ENCODE measurements at regions of chr1 and their contacts with region 1.

Region 1: DNA sequence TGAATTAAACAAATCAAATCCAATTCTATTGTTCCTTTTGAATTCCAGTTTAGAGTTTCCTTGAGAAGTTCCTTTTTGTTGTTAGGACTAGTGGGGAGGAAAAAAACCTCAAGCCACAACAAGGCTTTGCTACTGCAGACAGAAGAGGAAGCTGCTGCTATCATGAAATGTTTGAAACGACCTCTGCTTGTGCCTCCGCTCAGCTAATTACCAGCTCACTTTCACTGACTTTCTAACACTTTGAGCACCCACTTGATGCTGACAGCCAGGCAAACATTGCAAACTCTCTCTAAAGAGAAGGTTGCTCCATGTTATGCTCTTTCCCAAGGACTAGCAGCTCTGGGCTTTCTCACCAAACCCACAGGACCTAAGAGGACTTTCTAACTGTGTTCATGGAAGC is 203.9 kb upstream of the PROX1 start:
- DNase-seq: peak in 5 of 14 experiments; percentile 8 to 45 (median 43)
- ATAC-seq: peak; percentile 76
- H3K4me3 ChIP-seq: no peak overlapping the region
- H3K4me3 Mint-ChIP-seq: peak overlapping the region; percentile 50
- H3K27ac ChIP-seq: no peak overlapping the region
- H3K27ac Mint-ChIP-seq: peak overlapping the region; percentile 34
- H3K4me1 ChIP-seq: peaks cover 9% of the 10 kb centered on the region
- H3K4me1 Mint-ChIP-seq: peaks cover 26% of the 10 kb centered on the region
- H3K27me3 ChIP-seq: no peaks in the 10 kb centered on the region
- H3K27me3 Mint-ChIP-seq: peaks cover 4% of the 10 kb centered on the region
- CTCF ChIP-seq: no peak

Region 2: DNA sequence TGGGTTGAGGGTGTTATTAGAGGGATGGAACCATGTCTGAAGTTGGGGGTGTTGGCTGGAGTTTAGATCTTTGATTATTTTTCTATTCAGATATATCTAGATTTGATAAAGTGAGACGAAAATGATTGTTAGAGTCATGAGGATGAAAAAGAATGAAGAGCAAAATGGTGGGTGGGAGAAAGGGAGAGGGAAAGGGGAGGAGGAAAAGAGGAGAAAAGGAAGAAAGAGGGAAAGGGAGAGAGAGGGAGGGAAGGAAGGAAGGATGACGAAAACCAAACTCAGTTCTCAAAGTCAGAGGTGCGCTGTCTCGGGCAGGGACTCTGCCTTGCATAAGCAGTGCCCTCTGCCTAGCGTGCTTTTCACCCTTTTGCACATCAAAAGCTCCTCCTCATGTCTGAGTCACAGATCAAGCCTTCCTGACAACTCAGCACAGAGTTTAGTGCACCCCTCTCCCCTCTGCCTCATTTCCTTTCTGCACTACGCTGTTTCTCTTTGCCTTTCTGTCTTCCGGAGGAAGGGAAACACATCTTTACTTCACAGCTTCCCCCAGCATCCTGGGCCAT is 22.0 kb before region 1 on chr1:
- CTCF ChIA-PET with region 1: no interaction called
- POLR2A ChIA-PET with region 1: interaction called, 12 read pairs
- intact Hi-C with region 1: loop called in 1 of 2 experiments (anchors 1 kb)
- DNase-seq: peak; percentile 15 to 69 (median 41)
- ATAC-seq: peak; percentile 100
- H3K4me3 ChIP-seq: no peak overlapping the region
- H3K4me3 Mint-ChIP-seq: peak overlapping the region; percentile 49
- H3K27ac ChIP-seq: no peak overlapping the region
- H3K27ac Mint-ChIP-seq: peak overlapping the region; percentile 77
- H3K4me1 ChIP-seq: peaks cover 11% of the 10 kb centered on the region
- H3K4me1 Mint-ChIP-seq: peaks cover 16% of the 10 kb centered on the region
- H3K27me3 ChIP-seq: no peaks in the 10 kb centered on the region
- H3K27me3 Mint-ChIP-seq: no peaks in the 10 kb centered on the region
- CTCF ChIP-seq: no peak

Region 3: GRCh38 chr1:213852107-213852506 is 68.2 kb after region 1 on chr1:
- CTCF ChIA-PET with region 1: no interaction called
- POLR2A ChIA-PET with region 1: interaction called, 5 read pairs
- intact Hi-C with region 1: loop called in 1 of 2 experiments (anchors 2 kb)
- DNase-seq: peak in 7 of 14 experiments; percentile 12 to 75 (median 40)
- ATAC-seq: peak; percentile 93
- H3K4me3 ChIP-seq: no peak overlapping the region
- H3K4me3 Mint-ChIP-seq: no peak overlapping the region
- H3K27ac ChIP-seq: peak overlapping the region in 1 of 2 donors; percentile 67
- H3K27ac Mint-ChIP-seq: no peak overlapping the region
- H3K4me1 ChIP-seq: peaks cover 25% of the 10 kb centered on the region
- H3K4me1 Mint-ChIP-seq: peaks cover 9% of the 10 kb centered on the region
- H3K27me3 ChIP-seq: no peaks in the 10 kb centered on the region
- H3K27me3 Mint-ChIP-seq: no peaks in the 10 kb centered on the region
- CTCF ChIP-seq: no peak

Region 4: DNA sequence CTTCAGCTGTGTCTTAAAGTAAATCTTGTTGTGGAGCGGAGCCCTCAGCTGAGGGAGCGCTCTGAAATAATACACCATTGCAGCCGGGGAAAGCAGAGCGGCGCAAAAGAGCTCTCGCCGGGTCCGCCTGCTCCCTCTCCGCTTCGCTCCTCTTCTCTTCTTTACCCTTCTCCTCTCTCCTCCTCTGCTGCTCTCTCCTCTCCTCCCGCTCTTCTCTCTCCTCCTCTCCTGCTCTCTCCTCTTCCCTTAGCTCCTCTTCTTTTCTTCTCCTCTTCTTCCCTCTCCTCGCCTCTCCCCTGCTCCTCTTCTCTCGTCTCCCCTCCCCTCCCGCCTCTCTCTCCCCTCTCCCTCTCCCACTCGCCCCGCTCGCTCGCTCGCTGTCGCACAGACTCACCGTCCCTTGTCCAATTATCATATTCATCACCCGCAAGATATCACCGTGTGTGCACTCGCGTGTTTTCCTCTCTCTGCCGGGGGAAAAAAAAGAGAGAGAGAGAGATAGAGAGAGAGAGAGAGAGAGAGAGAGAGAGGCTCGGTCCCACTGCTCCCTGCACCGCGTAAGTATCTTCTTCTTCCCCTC is 204.1 kb after region 1 on chr1 and contains the start of gene PROX1:
- CTCF ChIA-PET with region 1: no interaction called
- POLR2A ChIA-PET with region 1: interaction called, 4 read pairs
- intact Hi-C with region 1: loop called in 1 of 2 experiments (anchors 5 kb)
- DNase-seq: peak in 10 of 14 experiments; percentile 21 to 70 (median 44)
- ATAC-seq: peak; percentile 87
- H3K4me3 ChIP-seq: peak within 1 kb of the TSS; percentile 44
- H3K4me3 Mint-ChIP-seq: peak within 1 kb of the TSS; percentile 92
- H3K27ac ChIP-seq: no peak within 1 kb of the TSS
- H3K27ac Mint-ChIP-seq: peak within 1 kb of the TSS; percentile 85
- H3K4me1 ChIP-seq: peaks cover 42% of the 10 kb centered on the region
- H3K4me1 Mint-ChIP-seq: peaks cover 58% of the 10 kb centered on the region
- H3K27me3 ChIP-seq: peaks cover 69 to 97% of the 10 kb centered on the region in 2 experiments
- H3K27me3 Mint-ChIP-seq: peaks cover 100% of the 10 kb centered on the region
- CTCF ChIP-seq: no peak
- total RNA-seq, gene PROX1: 0.03 TPM in 1 of 2 experiments, not detected in the other

Region 5: DNA sequence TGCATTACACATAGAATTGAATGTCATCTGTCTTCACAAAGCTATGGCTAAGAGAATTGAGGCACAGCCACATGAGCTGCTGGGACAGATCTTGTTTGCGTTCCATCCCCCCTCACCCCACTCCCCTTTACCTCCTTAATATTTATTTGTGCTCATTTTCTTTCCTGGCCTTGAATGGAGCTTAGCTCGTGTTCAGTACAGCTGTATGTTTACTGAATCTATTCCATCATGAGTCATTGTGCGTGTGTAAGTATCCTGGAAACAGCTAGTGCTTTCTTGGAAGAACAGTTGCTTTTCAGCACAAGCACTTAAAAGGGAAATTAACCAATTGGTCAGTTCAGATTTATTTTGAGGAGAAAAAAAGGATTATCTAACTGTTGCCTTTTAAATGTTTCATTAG is 218.6 kb after region 1 on chr1:
- CTCF ChIA-PET with region 1: no interaction called
- POLR2A ChIA-PET with region 1: no interaction called
- intact Hi-C with region 1: no loop called
- DNase-seq: no peak
- ATAC-seq: no peak
- H3K4me3 ChIP-seq: no peak overlapping the region
- H3K4me3 Mint-ChIP-seq: no peak overlapping the region
- H3K27ac ChIP-seq: no peak overlapping the region
- H3K27ac Mint-ChIP-seq: no peak overlapping the region
- H3K4me1 ChIP-seq: no peaks in the 10 kb centered on the region
- H3K4me1 Mint-ChIP-seq: no peaks in the 10 kb centered on the region
- H3K27me3 ChIP-seq: no peaks in the 10 kb centered on the region
- H3K27me3 Mint-ChIP-seq: peaks cover 11% of the 10 kb centered on the region
- CTCF ChIP-seq: no peak

Region 6: DNA sequence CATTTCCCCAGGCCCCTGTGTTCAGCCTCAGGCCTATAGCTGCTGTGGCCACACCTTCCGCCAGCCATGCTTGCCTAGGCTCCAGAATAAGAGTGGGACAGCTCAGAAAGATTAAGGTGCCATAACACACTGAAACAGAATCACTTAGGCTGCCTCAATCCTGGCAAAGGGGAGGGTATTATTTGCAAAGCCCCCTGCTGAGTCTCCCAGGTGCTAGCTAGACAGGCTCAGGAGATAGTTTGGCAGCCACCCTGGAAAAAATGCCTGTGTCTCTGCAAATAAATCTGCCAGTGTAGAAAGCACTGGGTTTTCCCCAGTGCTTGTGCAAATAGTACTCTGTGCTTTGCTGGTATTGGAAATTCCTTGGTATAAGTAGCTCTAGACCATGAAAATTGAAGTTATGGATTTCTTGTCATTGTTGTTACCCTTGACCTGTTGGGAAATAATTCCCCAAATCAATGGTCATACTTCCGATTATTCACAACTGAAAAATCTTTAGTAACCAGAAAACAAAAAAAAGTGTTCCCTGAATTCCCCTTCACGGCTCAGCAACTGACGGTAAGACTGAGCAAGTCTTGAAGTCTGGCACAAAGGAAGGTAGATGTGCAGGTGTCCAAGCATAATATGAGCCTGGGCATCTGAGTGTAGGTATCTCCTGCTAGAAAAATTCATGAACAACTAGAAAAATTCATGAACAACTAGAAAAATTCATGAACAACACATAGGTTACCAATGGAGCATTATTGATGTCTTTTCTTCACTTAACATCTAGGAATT is 260.7 kb after region 1 on chr1:
- CTCF ChIA-PET with region 1: no interaction called
- POLR2A ChIA-PET with region 1: no interaction called
- intact Hi-C with region 1: loop called in 1 of 2 experiments (anchors 5 kb)
- DNase-seq: no peak
- ATAC-seq: no peak
- H3K4me3 ChIP-seq: no peak overlapping the region
- H3K4me3 Mint-ChIP-seq: no peak overlapping the region
- H3K27ac ChIP-seq: no peak overlapping the region
- H3K27ac Mint-ChIP-seq: no peak overlapping the region
- H3K4me1 ChIP-seq: no peaks in the 10 kb centered on the region
- H3K4me1 Mint-ChIP-seq: no peaks in the 10 kb centered on the region
- H3K27me3 ChIP-seq: no peaks in the 10 kb centered on the region
- H3K27me3 Mint-ChIP-seq: peaks cover 18% of the 10 kb centered on the region
- CTCF ChIP-seq: no peak